GM12878 (cell line): ENCODE measurements at regions of chr21 and their contacts with region 1.

Region 1: GRCh38 chr21:42107881-42108553 is 36.9 kb downstream of the UMODL1 start:
- DNase-seq: no peak
- ATAC-seq: peak; percentile 98
- H3K4me3 ChIP-seq: no peak overlapping the region
- H3K27ac ChIP-seq: no peak overlapping the region
- H3K4me1 ChIP-seq: peaks cover 12% of the 10 kb centered on the region
- H3K27me3 ChIP-seq: peaks cover 1 to 2% of the 10 kb centered on the region in 2 experiments; a peak in 2 of 4 replicates
- CTCF ChIP-seq: peak; percentile 62 to 83 (median 77)
- EP300 ChIP-seq: no peak
- POLR2A ChIP-seq: no peak
- RAD21 ChIP-seq: peak; percentile 53

Region 2: DNA sequence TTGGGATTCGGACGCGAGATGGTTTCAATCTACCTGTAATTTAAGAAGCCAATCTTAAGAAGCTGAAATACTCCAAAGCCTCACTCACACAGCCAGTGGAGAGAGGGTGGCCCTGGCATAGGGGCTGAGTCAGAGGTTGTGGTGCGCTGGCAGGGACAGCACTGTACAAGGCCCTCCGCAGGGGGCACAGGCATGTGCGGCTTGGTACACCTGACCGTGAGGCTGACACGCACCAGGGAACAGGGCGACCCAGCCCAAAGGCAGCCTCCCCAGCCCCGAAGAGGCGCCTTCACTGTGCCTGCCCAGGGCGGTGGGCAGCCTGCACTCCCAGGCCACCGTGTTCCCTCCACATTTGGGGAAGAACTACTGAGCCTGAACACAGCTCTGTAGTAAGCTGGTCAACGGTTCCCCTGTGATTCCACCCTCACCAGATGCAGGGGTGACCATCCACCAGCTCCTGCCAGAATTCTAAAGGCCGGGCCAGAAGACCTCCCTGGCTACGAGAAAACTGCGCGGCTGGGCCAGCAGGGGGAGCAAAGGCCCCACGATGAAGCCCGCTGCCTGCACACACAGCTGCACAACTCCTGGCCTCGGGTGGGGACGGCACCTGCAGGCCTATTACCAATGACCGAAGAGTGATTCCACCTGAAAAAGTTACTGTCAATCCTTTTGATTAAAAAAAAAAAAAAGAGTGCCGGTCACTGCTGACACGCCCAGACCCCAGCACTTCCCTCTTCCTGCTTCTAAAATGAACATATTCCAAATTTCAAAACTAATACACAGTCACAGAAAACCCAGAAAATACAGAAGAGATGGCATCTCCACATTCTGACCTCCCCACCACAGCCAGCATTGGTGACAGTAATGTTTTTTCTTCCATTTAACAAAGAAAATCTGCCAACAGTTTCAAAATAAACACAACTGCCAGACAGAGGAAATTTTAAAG is 291.5 kb before region 1 on chr21:
- CTCF ChIA-PET with region 1: interaction called, 16 read pairs
- POLR2A ChIA-PET with region 1: no interaction called
- RAD21 ChIA-PET with region 1: interaction called, 14 read pairs
- SMC1A ChIA-PET with region 1: interaction called, 17 read pairs
- in situ Hi-C with region 1: loop called (anchors 5 kb)
- intact Hi-C with region 1: loop called (anchors 1 kb)
- DNase-seq: no peak
- ATAC-seq: peak; percentile 99
- H3K4me3 ChIP-seq: no peak overlapping the region
- H3K27ac ChIP-seq: no peak overlapping the region
- H3K4me1 ChIP-seq: peaks cover 5% of the 10 kb centered on the region; the same call in 1 of the 2 replicates
- H3K27me3 ChIP-seq: no peaks in the 10 kb centered on the region
- CTCF ChIP-seq: peak; percentile 84 to 93 (median 87)
- EP300 ChIP-seq: no peak
- POLR2A ChIP-seq: no peak
- RAD21 ChIP-seq: peak; percentile 88

Region 3: GRCh38 chr21:42009831-42010523 is 98.0 kb before region 1 on chr21 and contains the start of gene ZBTB21:
- CTCF ChIA-PET with region 1: interaction called, 23 read pairs
- POLR2A ChIA-PET with region 1: interaction called, 5 read pairs
- RAD21 ChIA-PET with region 1: interaction called, 9 read pairs
- SMC1A ChIA-PET with region 1: interaction called, 15 read pairs
- in situ Hi-C with region 1: no loop called
- intact Hi-C with region 1: no loop called
- DNase-seq: peak; percentile 96
- ATAC-seq: peak; percentile 89
- H3K4me3 ChIP-seq: peak within 1 kb of the TSS; percentile 81
- H3K27ac ChIP-seq: peak within 1 kb of the TSS; percentile 96
- H3K4me1 ChIP-seq: peaks cover 5% of the 10 kb centered on the region
- H3K27me3 ChIP-seq: no peaks in the 10 kb centered on the region
- CTCF ChIP-seq: no peak
- EP300 ChIP-seq: peak in 1 of 2 experiments; percentile 27; a peak in 1 of 4 replicates
- POLR2A ChIP-seq: peak; percentile 79
- RAD21 ChIP-seq: no peak
- polyA plus RNA-seq, gene ZBTB21: 1.8 to 2.3 TPM

Region 4: DNA sequence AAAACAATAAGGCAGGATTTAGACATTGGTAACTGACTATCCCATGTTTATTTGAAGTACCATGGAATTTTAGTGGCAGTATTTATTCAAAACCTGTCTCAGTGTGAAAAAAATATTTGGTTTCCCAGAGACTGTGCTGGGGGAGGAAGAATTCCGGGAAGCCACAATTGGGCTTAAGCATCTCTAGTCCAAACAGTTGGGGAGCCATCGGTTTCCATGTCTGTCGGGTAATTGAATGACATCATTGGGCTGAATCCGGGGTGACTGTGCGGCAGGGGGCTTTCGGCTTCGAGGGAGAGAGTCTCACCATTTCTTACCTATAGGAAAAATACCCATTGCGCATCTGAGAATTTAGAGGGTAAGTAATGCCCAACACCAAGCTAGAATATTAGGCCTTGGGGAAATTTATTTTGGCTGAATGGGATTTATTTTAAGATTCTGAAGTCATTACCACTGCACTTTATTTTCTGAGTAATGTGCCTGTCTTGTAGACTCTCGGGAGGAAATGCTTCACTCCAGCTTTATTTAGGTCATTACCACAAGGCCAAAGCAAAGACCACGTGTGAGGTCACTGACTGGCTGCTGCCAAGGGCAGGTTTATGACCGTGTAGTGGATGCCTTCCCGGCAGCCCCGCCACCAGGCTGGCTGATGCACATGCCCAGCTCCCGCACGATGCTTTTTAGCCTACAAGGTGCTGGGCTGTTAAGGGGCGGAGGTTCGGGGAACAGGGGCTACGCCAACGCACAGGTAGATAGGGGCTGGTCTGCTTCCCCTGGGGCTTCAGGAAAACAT is 60.0 kb before region 1 on chr21:
- CTCF ChIA-PET with region 1: no interaction called
- POLR2A ChIA-PET with region 1: no interaction called
- RAD21 ChIA-PET with region 1: no interaction called
- SMC1A ChIA-PET with region 1: no interaction called
- in situ Hi-C with region 1: loop called (anchors 10 kb)
- intact Hi-C with region 1: no loop called
- DNase-seq: no peak
- ATAC-seq: peak; percentile 56
- H3K4me3 ChIP-seq: no peak overlapping the region
- H3K27ac ChIP-seq: no peak overlapping the region
- H3K4me1 ChIP-seq: no peaks in the 10 kb centered on the region
- H3K27me3 ChIP-seq: no peaks in the 10 kb centered on the region; a peak in 1 of 4 replicates
- CTCF ChIP-seq: no peak
- EP300 ChIP-seq: no peak
- POLR2A ChIP-seq: no peak
- RAD21 ChIP-seq: no peak

Region 5: GRCh38 chr21:42414928-42415769 is 307.1 kb after region 1 on chr21:
- CTCF ChIA-PET with region 1: no interaction called
- POLR2A ChIA-PET with region 1: no interaction called
- RAD21 ChIA-PET with region 1: no interaction called
- SMC1A ChIA-PET with region 1: no interaction called
- in situ Hi-C with region 1: no loop called
- intact Hi-C with region 1: no loop called
- DNase-seq: peak; percentile 97
- ATAC-seq: peak; percentile 88
- H3K4me3 ChIP-seq: 0 out of 2 replicates have a peak overlapping the region, but pooled peaks have one; percentile 13
- H3K27ac ChIP-seq: peak overlapping the region; percentile 95
- H3K4me1 ChIP-seq: peaks cover 47% of the 10 kb centered on the region
- H3K27me3 ChIP-seq: no peaks in the 10 kb centered on the region
- CTCF ChIP-seq: no peak
- EP300 ChIP-seq: peak; percentile 89 to 95; a peak in 3 of 4 replicates
- POLR2A ChIP-seq: peak; percentile 63; the same call in 1 of the 2 replicates
- RAD21 ChIP-seq: peak; percentile 18; the same call in 1 of the 2 replicates